ENCODE measurements at regions of chr17 and their contacts with region 1.

Region 1: DNA sequence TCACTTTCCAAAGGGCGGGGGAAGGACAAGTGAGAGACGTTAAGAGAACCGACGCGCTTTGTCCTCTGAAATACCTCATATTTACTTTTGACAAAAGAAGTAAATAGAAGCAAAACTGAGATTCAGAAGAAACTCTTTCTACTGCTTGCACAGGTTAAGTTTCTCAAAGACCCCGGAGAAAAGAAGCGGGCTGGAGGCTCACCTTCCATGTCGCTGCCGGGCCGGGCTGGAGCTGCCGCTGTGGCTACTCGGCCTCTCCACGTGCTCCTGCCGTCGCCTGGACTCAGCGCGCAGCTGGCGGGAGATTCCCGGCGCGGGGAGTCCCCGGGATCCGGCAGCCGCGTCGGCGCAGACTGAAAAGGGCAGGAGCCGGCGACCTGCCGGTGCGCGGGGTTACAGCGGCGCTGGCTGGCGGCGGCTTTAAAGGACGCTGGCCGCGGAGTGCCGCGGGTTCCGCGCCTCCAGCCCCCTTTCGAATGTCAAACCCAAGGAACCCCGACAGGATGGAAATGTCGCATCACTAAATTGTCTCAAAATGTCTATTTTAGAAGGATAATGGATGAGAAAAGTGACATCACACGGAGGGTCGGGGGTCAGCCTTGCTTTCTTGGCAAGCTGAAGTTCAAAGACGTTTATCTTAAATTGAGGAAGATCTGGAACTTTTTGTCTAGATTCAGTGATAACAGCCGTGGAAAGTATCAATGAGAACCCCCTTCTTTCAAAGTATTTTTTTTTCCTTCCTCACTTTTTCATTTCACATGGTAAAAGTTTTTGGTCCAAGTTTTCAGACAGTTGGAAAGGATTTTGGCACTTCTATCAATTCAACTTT is at the start of gene IKZF3:
- DNase-seq: peak; percentile 79
- H3K4me3 Mint-ChIP-seq: peak within 1 kb of the TSS; percentile 91
- H3K27ac Mint-ChIP-seq: peak within 1 kb of the TSS; percentile 73
- H3K4me1 Mint-ChIP-seq: peaks cover 63% of the 10 kb centered on the region
- H3K27me3 Mint-ChIP-seq: peaks cover 5% of the 10 kb centered on the region
- total RNA-seq, gene IKZF3: 22.8 and 25.1 TPM in 2 replicates

Region 2: DNA sequence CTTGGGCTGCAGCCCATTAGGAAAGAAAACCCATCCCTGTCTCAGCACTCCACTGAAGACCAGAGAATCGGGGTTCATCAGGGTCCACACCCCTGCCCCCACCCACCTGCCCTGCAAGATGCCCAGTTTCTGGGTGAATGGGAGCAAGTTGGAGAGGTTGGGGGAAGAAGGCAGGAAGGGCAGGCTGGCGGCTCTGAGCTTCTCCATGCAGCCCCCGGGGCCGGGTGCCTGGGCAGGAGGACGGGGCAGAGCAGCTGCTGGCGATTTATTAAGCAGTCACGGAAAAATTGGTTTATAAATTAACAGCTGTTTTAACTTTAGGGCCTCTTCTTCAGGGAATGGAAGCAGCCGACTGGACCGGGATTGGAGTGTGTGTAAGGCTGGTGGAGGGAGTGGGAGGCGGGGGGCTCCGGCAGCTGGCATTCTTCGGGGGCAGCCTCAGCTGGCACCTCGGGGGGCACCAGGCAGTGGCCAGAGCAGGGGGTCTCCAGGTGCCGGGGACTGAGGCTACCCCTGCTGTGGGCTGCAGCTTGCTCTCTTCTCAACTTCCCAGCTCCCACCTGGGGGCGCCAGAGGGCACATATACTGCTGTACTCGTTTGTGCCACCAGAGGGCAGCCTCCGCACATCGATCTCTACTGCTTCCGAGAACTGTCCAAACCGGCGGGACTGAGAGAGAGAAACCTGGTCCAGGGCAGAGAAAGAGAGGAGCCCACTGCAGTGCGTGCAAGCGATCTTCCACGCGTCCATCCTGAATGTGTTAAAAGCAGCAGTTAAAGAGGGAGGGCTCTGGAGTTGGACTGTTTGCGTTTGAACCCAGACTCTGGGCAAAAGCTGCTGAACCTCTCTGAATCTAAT is 242.4 kb before region 1 on chr17:
- intact Hi-C with region 1: loop called (anchors 1 kb)
- DNase-seq: peak; percentile 86
- H3K4me3 Mint-ChIP-seq: peak overlapping the region; percentile 68
- H3K27ac Mint-ChIP-seq: peak overlapping the region; percentile 62
- H3K4me1 Mint-ChIP-seq: peaks cover 27% of the 10 kb centered on the region
- H3K27me3 Mint-ChIP-seq: peaks cover 62% of the 10 kb centered on the region

Region 3: GRCh38 chr17:39687811-39688518 is 176.2 kb before region 1 on chr17 and contains the start of gene PGAP3:
- intact Hi-C with region 1: loop called (anchors 5 kb)
- DNase-seq: peak; percentile 73
- H3K4me3 Mint-ChIP-seq: peak within 1 kb of the TSS; percentile 94
- H3K27ac Mint-ChIP-seq: peak within 1 kb of the TSS; percentile 69
- H3K4me1 Mint-ChIP-seq: peaks cover 22% of the 10 kb centered on the region
- H3K27me3 Mint-ChIP-seq: no peaks in the 10 kb centered on the region
- total RNA-seq, gene PGAP3: 14.4 and 16.9 TPM in 2 replicates

Region 4: DNA sequence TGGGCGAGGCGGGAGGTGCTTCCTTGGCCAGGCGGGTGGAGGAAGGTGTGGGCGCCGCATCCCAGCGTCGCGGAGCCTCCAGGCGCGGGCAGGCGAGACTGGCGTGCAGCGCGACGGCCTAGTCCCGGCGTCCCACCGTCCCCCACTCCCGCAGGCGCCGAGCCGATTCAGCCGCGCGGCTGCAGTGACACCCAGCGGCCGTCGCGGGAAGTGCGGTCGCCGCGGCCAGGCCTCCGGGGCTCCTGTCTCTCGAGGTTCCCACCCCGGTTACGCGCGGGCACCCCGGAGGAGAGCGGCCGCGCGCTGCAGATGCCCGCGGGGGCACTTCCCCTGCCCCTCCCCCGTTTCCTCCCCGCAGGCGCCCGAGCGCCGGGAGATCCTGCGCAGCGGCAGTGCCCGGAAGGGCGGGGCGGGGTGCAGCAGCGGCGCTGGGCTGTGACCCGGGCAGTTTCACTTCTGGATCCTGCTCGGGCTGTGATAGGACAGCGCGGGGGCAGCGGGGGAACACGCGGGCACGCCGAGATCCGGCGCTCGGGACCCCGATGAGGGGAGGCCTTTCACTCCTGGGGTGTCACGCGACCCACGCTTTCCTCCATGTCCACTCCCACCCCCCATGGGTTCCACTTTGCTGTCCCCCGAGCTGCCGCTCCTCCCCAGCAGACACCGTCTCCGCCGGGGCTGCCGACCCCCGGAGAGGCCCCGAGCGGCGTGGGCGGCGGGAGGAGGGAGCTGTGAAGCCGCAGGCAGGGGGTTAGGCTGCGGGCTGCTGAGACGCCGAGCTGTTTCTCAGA is 109.8 kb before region 1 on chr17:
- intact Hi-C with region 1: loop called (anchors 1 kb)
- DNase-seq: peak; percentile 97
- H3K4me3 Mint-ChIP-seq: peak overlapping the region; percentile 81
- H3K27ac Mint-ChIP-seq: peak overlapping the region; percentile 53
- H3K4me1 Mint-ChIP-seq: peaks cover 60% of the 10 kb centered on the region
- H3K27me3 Mint-ChIP-seq: no peaks in the 10 kb centered on the region

Region 5: GRCh38 chr17:39794249-39794970 is 69.7 kb before region 1 on chr17:
- intact Hi-C with region 1: loop called (anchors 1 kb)
- DNase-seq: no peak
- H3K4me3 Mint-ChIP-seq: peak overlapping the region; percentile 49
- H3K27ac Mint-ChIP-seq: peak overlapping the region; percentile 73
- H3K4me1 Mint-ChIP-seq: peaks cover 64% of the 10 kb centered on the region
- H3K27me3 Mint-ChIP-seq: no peaks in the 10 kb centered on the region

Region 6: GRCh38 chr17:39845052-39845846 is 18.9 kb before region 1 on chr17:
- intact Hi-C with region 1: loop called (anchors 2 kb)
- DNase-seq: no peak
- H3K4me3 Mint-ChIP-seq: no peak overlapping the region
- H3K27ac Mint-ChIP-seq: no peak overlapping the region
- H3K4me1 Mint-ChIP-seq: peaks cover 48% of the 10 kb centered on the region
- H3K27me3 Mint-ChIP-seq: peaks cover 2% of the 10 kb centered on the region

Region 7: GRCh38 chr17:39889200-39889599 is 25.1 kb after region 1 on chr17:
- intact Hi-C with region 1: no loop called
- DNase-seq: no peak
- H3K4me3 Mint-ChIP-seq: no peak overlapping the region
- H3K27ac Mint-ChIP-seq: no peak overlapping the region
- H3K4me1 Mint-ChIP-seq: no peaks in the 10 kb centered on the region
- H3K27me3 Mint-ChIP-seq: peaks cover 17% of the 10 kb centered on the region

Region 8: DNA sequence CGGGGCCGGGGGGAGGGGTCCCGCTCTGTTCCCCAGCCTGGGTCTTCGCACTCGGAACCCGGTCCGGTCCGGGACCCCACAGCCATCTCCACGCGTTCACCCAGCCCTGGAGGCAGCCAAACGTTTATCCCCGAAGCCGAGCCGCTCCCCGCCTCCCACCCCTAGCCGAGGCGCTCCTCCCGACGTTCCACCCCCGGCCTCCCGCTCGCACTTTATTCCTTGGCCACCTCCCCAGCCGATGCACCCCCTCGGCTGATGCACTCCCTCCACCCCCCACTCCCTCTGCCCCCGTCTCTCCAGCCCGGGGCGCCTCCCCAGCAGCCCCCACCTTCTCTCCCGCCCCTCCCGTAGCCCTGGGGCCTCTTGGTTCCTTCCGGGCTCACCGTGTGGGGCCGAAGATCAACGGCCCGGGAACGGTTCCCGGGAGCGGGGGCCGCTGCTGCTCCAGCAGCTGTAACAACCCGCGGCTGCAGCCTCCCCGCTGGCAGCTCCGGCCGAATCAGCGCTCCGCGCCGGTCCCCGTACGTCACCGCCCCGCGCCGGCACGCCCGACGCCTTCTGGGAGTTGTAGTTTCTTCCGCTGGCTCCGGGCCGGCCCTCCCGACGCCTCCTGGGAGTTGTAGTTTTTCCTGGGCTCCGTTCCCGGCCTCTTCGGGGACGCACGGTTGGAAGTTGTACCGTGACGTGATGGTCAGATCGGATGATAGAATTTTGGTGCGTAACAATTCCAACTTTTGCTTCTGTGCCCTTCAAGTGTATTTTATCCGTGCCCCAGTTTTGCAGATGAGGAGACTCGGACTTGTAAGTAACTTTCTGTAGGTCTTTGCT is 63.2 kb after region 1 on chr17 and contains the starts of genes LRRC3C and ORMDL3:
- intact Hi-C with region 1: loop called (anchors 1 kb)
- DNase-seq: peak; percentile 91
- H3K4me3 Mint-ChIP-seq: peak within 1 kb of the TSS; percentile 97
- H3K27ac Mint-ChIP-seq: peak within 1 kb of the TSS; percentile 92
- H3K4me1 Mint-ChIP-seq: peaks cover 60% of the 10 kb centered on the region
- H3K27me3 Mint-ChIP-seq: no peaks in the 10 kb centered on the region
- total RNA-seq, gene LRRC3C: not detected in 2 replicates
- total RNA-seq, gene ORMDL3: 70.8 and 77.4 TPM in 2 replicates

Measured in activated T-helper 1 cell treated with anti-CD3 and anti-CD28 coated beads, Interleukin-12 subunit alpha, Interleukin-12 subunit beta, Interleukin-2, Interleukin-4 antibody, amounts not matched to agents 30 ng/mL and 10 ng/mL and 1 ng/mL, durations not matched to agents 14 hours and 24 hours and 36 hours (primary cell).